ENCODE measurements at regions of chr11 and their contacts with region 1.

Region 1: DNA sequence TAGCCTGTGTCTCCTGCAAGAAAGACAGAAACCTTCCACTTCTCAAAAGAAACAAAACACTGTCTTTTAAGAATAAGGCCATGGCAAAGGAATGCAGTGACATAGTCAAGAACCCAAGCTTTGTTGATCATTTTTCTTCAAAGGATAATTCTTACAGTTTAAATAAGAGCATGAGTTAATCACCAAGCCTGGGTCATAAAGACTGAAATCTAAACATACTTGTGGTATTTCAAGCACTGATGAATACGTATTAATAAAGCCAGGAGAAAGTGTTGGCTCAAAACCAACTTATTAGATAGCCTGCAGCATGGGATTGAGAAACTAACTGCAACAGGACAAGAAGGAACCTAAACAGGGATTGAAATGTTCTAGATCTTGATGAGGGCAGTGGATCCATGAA is 143.3 kb upstream of the MTNR1B start:
- DNase-seq: no peak
- ATAC-seq: no peak
- H3K4me3 ChIP-seq: no peak overlapping the region
- H3K27ac ChIP-seq: no peak overlapping the region
- H3K4me1 ChIP-seq: peaks cover 0 to 5% (median 0%) of the 10 kb centered on the region in 12 donors
- H3K27me3 ChIP-seq: no peaks in the 10 kb centered on the region
- CTCF ChIP-seq: no peak
- POLR2A ChIP-seq: no peak

Region 2: GRCh38 chr11:92765965-92766371 is 60.2 kb before region 1 on chr11:
- intact Hi-C with region 1: loop called in 1 of 10 experiments (anchors 10 kb)
- DNase-seq: peak in 4 of 5 donors; percentile 27 to 45 (median 32)
- ATAC-seq: peak in 3 of 4 donors; percentile 57 to 74 (median 66)
- H3K4me3 ChIP-seq: peak overlapping the region in 9 of 12 donors; percentile 26 to 47 (median 36)
- H3K27ac ChIP-seq: peak overlapping the region in 3 of 12 donors; percentile 8 to 44 (median 20)
- H3K4me1 ChIP-seq: peaks cover 0 to 24% (median 7%) of the 10 kb centered on the region in 12 donors
- H3K27me3 ChIP-seq: no peaks in the 10 kb centered on the region
- CTCF ChIP-seq: no peak
- POLR2A ChIP-seq: no peak

Region 3: DNA sequence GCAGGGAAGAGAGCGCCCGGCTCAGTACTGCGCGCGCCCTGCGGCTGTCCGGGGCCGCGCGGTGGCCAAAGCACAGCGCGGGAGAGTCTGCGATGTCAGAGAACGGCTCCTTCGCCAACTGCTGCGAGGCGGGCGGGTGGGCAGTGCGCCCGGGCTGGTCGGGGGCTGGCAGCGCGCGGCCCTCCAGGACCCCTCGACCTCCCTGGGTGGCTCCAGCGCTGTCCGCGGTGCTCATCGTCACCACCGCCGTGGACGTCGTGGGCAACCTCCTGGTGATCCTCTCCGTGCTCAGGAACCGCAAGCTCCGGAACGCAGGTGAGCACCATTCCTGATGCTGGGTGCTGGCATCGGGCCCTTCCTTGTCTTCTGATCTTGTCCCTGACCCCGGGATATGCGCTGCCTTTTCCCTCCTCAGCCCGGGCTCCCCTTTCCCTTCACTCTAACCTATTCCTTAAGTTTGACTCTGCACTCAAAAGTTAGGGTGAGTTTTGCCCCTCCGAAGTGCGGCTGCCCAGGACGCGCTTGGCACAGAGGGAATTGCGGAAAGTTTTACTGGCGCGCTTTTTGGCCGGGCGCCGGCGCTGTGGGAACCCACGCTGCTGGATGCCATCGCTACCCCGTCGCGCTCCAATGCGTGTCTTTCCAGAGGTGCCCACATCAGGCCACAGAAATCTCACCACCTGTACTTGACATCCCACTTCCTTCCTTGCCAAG is 143.7 kb after region 1 on chr11 and contains the start of gene MTNR1B:
- intact Hi-C with region 1: no loop called
- DNase-seq: no peak
- ATAC-seq: no peak
- H3K4me3 ChIP-seq: no peak within 1 kb of the TSS
- H3K27ac ChIP-seq: no peak within 1 kb of the TSS
- H3K4me1 ChIP-seq: no peaks in the 10 kb centered on the region
- H3K27me3 ChIP-seq: peaks cover 0 to 49% (median 18%) of the 10 kb centered on the region in 9 donors
- CTCF ChIP-seq: no peak
- POLR2A ChIP-seq: no peak
- total RNA-seq, gene MTNR1B: not detected

Measured in heart left ventricle (tissue), 16 donors.